ENCODE measurements at regions of chr6 and their contacts with region 1.

Region 1: DNA sequence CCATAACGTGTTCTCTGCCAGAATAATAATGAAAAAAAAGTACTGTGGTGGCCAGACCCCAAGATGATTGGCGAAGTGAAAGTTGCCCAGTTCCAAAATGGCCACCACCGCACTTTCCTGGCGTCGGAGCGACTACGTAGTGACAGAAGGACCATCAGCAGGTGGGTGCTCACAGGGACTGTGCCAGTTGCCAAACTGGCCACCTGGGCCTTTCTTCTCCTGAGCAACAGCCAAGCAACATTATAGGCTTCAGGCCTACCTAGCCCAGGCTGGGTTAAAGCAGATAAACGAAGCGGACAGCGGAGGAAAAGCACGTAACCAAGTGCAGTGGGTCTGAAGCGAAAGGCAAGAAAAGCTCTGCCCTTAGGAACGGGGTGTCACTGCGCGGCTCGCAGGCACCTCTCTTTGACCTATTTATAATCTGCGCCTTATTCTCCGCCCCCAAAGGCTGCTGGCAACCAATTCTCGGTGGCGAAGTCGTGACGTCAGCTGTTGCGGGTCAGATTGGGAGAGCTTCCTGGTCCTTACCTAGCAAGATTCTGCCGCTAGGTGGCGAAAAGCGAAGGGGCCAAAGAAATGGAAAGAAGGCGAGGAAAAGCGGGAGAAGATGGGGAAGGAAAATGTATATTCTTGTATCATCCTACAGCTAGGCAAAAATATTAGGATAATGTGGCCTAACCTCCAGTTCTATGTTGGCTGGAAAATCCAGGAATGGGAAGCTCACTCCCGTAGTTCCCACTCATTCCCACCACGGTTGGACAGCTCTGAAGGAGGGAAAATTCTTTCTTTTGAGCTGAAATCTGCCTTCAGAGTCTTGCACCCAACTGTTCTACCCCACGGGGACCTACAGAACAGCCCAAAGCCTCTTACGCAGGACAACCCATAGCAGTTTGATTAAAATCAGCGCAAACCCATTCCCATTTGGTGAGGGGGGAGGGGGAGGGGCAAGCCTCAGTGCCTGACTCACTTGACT is 6.9 kb upstream of the MOG start:
- DNase-seq: peak; percentile 94 to 99 (median 96)
- ATAC-seq: peak; percentile 99
- H3K4me3 ChIP-seq: peak overlapping the region; percentile 33
- H3K27ac ChIP-seq: peak overlapping the region; percentile 71
- H3K4me1 ChIP-seq: peaks cover 0 to 3% of the 10 kb centered on the region in 2 experiments; a peak in 2 of 5 replicates
- H3K27me3 ChIP-seq: peaks cover 1 to 10% of the 10 kb centered on the region in 2 experiments; a peak in 2 of 5 replicates
- CTCF ChIP-seq: peak; percentile 88 to 100 (median 98)
- EP300 ChIP-seq: no peak
- POLR2A ChIP-seq: peak; percentile 71
- RAD21 ChIP-seq: peak in 1 of 2 experiments; percentile 18; a peak in 2 of 4 replicates

Region 2: DNA sequence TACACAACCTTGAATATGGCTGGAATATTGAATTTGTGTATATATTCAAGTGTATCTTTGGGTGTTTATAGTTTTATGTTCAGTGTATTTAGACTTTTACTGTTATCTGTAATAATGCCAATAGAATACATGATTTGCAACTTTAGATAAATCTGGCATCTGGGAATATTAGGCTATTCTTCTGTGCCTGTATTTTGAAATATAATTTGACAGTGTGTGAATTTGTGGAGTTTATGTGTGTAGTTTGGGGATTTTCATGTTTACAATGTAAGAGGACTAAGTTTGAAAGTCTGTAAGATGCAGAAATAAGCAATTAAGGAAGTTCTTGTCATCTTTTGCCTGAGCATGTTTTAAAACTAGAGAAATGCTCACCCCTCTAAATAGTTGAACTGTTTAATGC is 211.0 kb before region 1 on chr6 and contains the start of gene OR10C1:
- CTCF ChIA-PET with region 1: interaction called, 3 read pairs
- POLR2A ChIA-PET with region 1: no interaction called
- in situ Hi-C with region 1: no loop called
- intact Hi-C with region 1: loop called (anchors 5 kb)
- DNase-seq: no peak
- ATAC-seq: no peak
- H3K4me3 ChIP-seq: no peak within 1 kb of the TSS
- H3K27ac ChIP-seq: no peak within 1 kb of the TSS
- H3K4me1 ChIP-seq: 0 out of 5 replicates have a peak, but pooled peaks cover 0 to 3% of the 10 kb centered on the region in 2 experiments
- H3K27me3 ChIP-seq: peaks cover 0 to 11% of the 10 kb centered on the region in 2 experiments; a peak in 3 of 5 replicates
- CTCF ChIP-seq: no peak
- EP300 ChIP-seq: no peak
- POLR2A ChIP-seq: no peak
- RAD21 ChIP-seq: no peak
- polyA plus RNA-seq, gene OR10C1: not detected

Region 3: GRCh38 chr6:29632789-29633533 is 17.0 kb before region 1 on chr6 and contains the start of gene GABBR1:
- CTCF ChIA-PET with region 1: interaction called, 3 read pairs
- POLR2A ChIA-PET with region 1: interaction called, 7 read pairs
- in situ Hi-C with region 1: no loop called
- intact Hi-C with region 1: loop called (anchors 2 kb)
- DNase-seq: peak; percentile 94 to 99 (median 98)
- ATAC-seq: peak; percentile 87
- H3K4me3 ChIP-seq: peak within 1 kb of the TSS; percentile 84
- H3K27ac ChIP-seq: peak within 1 kb of the TSS; percentile 77
- H3K4me1 ChIP-seq: peaks cover 32 to 44% of the 10 kb centered on the region in 2 experiments; a peak in 4 of 5 replicates
- H3K27me3 ChIP-seq: no peaks in the 10 kb centered on the region
- CTCF ChIP-seq: no peak
- EP300 ChIP-seq: no peak
- POLR2A ChIP-seq: peak; percentile 60
- RAD21 ChIP-seq: no peak
- polyA plus RNA-seq, gene GABBR1: 2.2 to 2.4 TPM

Region 4: GRCh38 chr6:29685718-29686326 is 35.8 kb after region 1 on chr6:
- CTCF ChIA-PET with region 1: interaction called, 3 read pairs
- POLR2A ChIA-PET with region 1: interaction called, 4 read pairs
- in situ Hi-C with region 1: no loop called
- intact Hi-C with region 1: loop called (anchors 1 kb)
- DNase-seq: peak in 3 of 4 experiments; percentile 32 to 54 (median 42)
- ATAC-seq: peak; percentile 86
- H3K4me3 ChIP-seq: no peak overlapping the region
- H3K27ac ChIP-seq: no peak overlapping the region
- H3K4me1 ChIP-seq: peaks cover 0 to 2% of the 10 kb centered on the region in 2 experiments; a peak in 2 of 5 replicates
- H3K27me3 ChIP-seq: peaks cover 8 to 28% of the 10 kb centered on the region in 2 experiments; a peak in 4 of 5 replicates
- CTCF ChIP-seq: peak; percentile 62 to 67 (median 63)
- EP300 ChIP-seq: no peak
- POLR2A ChIP-seq: no peak
- RAD21 ChIP-seq: peak in 1 of 2 experiments; percentile 63; a peak in 2 of 4 replicates

Region 5: DNA sequence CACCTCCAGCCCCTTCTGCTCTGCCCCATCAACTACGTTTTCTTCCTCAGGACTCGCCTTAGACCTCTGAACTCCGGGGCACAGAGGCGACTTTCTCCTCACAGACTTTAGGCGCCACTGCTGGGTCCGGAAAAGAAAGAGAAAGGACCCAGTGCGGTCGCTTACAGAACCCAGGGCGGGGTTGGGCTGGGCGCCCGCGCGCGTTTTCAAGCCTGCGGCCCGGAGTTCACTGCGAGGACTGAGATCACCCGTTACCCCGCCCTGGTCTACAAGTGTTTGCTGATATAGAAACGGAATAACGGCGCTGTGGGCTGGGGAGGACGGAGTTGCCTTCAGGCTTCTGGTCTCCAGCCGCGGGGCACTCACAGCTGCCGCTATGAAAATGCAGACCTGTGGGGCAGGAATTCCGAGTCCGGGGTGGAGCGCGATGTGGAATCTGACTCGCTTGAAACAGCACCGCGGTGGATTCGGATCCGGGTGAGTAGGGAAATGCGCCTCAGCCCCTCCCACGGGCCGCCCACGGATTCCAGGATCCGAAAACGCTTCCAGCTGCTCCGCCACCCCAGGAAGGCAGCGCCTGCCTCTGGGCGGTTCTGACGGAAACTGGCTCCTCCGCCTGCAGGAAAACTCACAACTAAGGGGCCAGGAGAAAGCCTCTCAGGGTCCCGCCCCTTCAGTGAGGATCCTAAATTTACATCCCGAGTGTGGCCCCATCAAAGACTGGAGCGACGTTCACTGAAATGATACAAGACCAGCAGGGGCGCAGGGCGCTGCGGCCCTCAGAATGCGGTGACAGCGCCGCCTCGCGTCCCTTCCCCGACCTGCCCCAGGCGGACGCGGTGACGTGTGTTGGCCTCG is 102.7 kb after region 1 on chr6:
- CTCF ChIA-PET with region 1: interaction called, 6 read pairs
- POLR2A ChIA-PET with region 1: no interaction called
- in situ Hi-C with region 1: no loop called
- intact Hi-C with region 1: loop called (anchors 5 kb)
- DNase-seq: peak; percentile 83 to 95 (median 88)
- ATAC-seq: peak; percentile 91
- H3K4me3 ChIP-seq: peak overlapping the region; percentile 51
- H3K27ac ChIP-seq: peak overlapping the region; percentile 68
- H3K4me1 ChIP-seq: peaks cover 14 to 30% of the 10 kb centered on the region in 2 experiments
- H3K27me3 ChIP-seq: peaks cover 0 to 4% of the 10 kb centered on the region in 2 experiments; a peak in 2 of 5 replicates
- CTCF ChIP-seq: peak; percentile 99 to 100 (median 100)
- EP300 ChIP-seq: no peak
- POLR2A ChIP-seq: peak; percentile 52; the same call in 1 of the 2 replicates
- RAD21 ChIP-seq: peak; percentile 75 to 90

Region 6: DNA sequence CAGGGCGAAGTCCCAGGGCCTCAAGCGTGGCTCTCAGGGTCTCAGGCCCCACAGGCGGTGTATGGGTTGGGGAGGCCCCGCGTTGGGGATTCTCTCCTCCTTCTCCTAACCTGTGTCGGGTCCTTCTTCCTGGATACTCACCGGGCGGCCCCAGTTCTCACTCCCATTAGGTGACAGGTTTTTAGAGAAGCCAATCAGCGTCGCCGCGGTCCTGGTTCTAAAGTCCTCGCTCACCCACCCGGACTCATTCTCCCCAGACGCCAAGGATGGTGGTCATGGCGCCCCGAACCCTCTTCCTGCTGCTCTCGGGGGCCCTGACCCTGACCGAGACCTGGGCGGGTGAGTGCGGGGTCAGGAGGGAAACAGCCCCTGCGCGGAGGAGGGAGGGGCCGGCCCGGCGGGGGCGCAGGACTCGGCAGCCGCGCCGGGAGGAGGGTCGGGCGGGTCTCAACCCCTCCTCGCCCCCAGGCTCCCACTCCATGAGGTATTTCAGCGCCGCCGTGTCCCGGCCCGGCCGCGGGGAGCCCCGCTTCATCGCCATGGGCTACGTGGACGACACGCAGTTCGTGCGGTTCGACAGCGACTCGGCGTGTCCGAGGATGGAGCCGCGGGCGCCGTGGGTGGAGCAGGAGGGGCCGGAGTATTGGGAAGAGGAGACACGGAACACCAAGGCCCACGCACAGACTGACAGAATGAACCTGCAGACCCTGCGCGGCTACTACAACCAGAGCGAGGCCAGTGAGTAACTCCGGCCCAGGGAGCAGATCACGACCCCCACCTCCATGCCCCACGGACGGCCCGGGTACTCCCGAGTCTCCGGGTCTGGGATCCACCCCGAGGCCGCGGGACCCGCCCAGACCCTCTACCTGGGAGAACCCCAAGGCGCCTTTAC is 177.8 kb after region 1 on chr6 and contains the start of gene HLA-G:
- CTCF ChIA-PET with region 1: interaction called, 3 read pairs
- POLR2A ChIA-PET with region 1: interaction called, 3 read pairs
- in situ Hi-C with region 1: no loop called
- intact Hi-C with region 1: loop called (anchors 10 kb)
- DNase-seq: no peak
- ATAC-seq: no peak
- H3K4me3 ChIP-seq: no peak within 1 kb of the TSS
- H3K27ac ChIP-seq: no peak within 1 kb of the TSS
- H3K4me1 ChIP-seq: peaks cover 0 to 11% of the 10 kb centered on the region in 2 experiments; a peak in 1 of 5 replicates
- H3K27me3 ChIP-seq: peaks cover 7 to 30% of the 10 kb centered on the region in 2 experiments; a peak in 4 of 5 replicates
- CTCF ChIP-seq: no peak
- EP300 ChIP-seq: no peak
- POLR2A ChIP-seq: no peak
- RAD21 ChIP-seq: no peak
- polyA plus RNA-seq, gene HLA-G: not detected

Region 7: DNA sequence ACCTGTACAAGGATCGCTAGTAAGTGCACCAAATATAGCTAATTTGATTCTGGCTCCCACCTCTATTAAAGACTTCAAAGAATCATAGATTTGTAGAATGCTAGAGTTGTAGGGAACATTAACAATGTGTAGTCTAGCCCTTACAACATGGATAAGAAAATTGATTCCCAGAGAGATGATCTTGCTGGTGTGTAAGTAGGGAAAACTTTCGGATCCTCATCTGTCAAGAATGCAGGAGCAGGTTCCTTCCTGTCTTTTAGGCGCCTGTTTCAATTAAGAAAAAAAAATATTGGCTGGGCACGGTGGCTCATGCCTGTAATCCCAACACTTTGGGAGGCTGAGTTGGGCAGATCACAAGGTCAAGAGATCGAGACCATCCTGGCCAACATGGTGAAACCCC is 437.9 kb after region 1 on chr6:
- CTCF ChIA-PET with region 1: no interaction called
- POLR2A ChIA-PET with region 1: no interaction called
- in situ Hi-C with region 1: no loop called
- intact Hi-C with region 1: no loop called
- DNase-seq: no peak
- ATAC-seq: no peak
- H3K4me3 ChIP-seq: no peak overlapping the region
- H3K27ac ChIP-seq: no peak overlapping the region
- H3K4me1 ChIP-seq: no peaks in the 10 kb centered on the region; a peak in 1 of 5 replicates
- H3K27me3 ChIP-seq: peaks cover 15 to 23% of the 10 kb centered on the region in 2 experiments; a peak in 4 of 5 replicates
- CTCF ChIP-seq: no peak
- EP300 ChIP-seq: no peak
- POLR2A ChIP-seq: no peak
- RAD21 ChIP-seq: no peak

Measured in K562 (cell line).